ENCODE measurements at regions of chr17 and their contacts with region 1.

Region 1: GRCh38 chr17:49788478-49789242 is at the start of gene KAT7:
- DNase-seq: peak; percentile 94 to 100 (median 98)
- ATAC-seq: peak; percentile 82
- H3K4me3 ChIP-seq: peak within 1 kb of the TSS; percentile 84 to 98
- H3K4me3 Mint-ChIP-seq: peak within 1 kb of the TSS; percentile 99
- H3K27ac ChIP-seq: peak within 1 kb of the TSS; percentile 96 to 99
- H3K27ac Mint-ChIP-seq: peak within 1 kb of the TSS; percentile 100
- H3K4me1 ChIP-seq: peaks cover 45% of the 10 kb centered on the region
- H3K4me1 Mint-ChIP-seq: peaks cover 54% of the 10 kb centered on the region
- H3K27me3 ChIP-seq: no peaks in the 10 kb centered on the region
- H3K27me3 Mint-ChIP-seq: no peaks in the 10 kb centered on the region
- CTCF ChIP-seq: no peak
- total RNA-seq, gene KAT7: 170 to 189 TPM

Region 2: GRCh38 chr17:49567871-49568694 is 220.6 kb before region 1 on chr17:
- CTCF ChIA-PET with region 1: interaction called, 6 read pairs
- POLR2A ChIA-PET with region 1: interaction called, 3 read pairs
- intact Hi-C with region 1: loop called (anchors 1 to 2 kb)
- DNase-seq: peak; percentile 69 to 91 (median 82)
- ATAC-seq: peak; percentile 59
- H3K4me3 ChIP-seq: peak overlapping the region; percentile 6 to 25
- H3K4me3 Mint-ChIP-seq: peak overlapping the region; percentile 62
- H3K27ac ChIP-seq: no peak overlapping the region
- H3K27ac Mint-ChIP-seq: no peak overlapping the region
- H3K4me1 ChIP-seq: peaks cover 12% of the 10 kb centered on the region
- H3K4me1 Mint-ChIP-seq: peaks cover 8% of the 10 kb centered on the region
- H3K27me3 ChIP-seq: no peaks in the 10 kb centered on the region
- H3K27me3 Mint-ChIP-seq: peaks cover 12% of the 10 kb centered on the region
- CTCF ChIP-seq: peak; percentile 96

Region 3: GRCh38 chr17:49715717-49716279 is 72.9 kb before region 1 on chr17:
- CTCF ChIA-PET with region 1: interaction called, 3 read pairs
- POLR2A ChIA-PET with region 1: interaction called, 8 read pairs
- intact Hi-C with region 1: loop called in 1 of 2 experiments (anchors 2 kb)
- DNase-seq: peak in 6 of 9 experiments; percentile 27 to 92 (median 58)
- ATAC-seq: peak; percentile 65
- H3K4me3 ChIP-seq: no peak overlapping the region
- H3K4me3 Mint-ChIP-seq: peak overlapping the region; percentile 20
- H3K27ac ChIP-seq: peak overlapping the region; percentile 67 to 91
- H3K27ac Mint-ChIP-seq: peak overlapping the region; percentile 92
- H3K4me1 ChIP-seq: peaks cover 31% of the 10 kb centered on the region
- H3K4me1 Mint-ChIP-seq: peaks cover 41% of the 10 kb centered on the region
- H3K27me3 ChIP-seq: no peaks in the 10 kb centered on the region
- H3K27me3 Mint-ChIP-seq: no peaks in the 10 kb centered on the region
- CTCF ChIP-seq: no peak

Region 4: DNA sequence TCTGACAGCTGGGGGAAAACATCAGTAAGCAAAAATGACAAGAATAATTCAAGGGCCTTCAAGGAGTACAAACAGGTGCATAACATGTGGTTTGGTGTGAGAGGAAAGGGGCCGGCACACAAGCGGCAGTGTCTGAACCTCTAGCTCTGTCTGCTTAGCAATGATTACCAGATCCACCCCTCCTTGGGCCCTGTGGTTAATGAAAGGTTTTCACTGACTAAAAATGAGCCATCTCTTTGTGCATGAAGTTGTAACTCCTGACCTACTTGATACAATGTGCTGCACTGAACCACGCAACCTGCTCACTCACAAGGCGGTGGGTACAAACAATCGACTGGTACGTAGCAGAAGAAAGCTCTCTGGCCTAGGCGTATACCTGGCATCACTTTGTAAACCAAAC is 39.9 kb before region 1 on chr17:
- CTCF ChIA-PET with region 1: interaction called, 4 read pairs
- POLR2A ChIA-PET with region 1: interaction called, 10 read pairs
- intact Hi-C with region 1: no loop called
- DNase-seq: peak in 8 of 9 experiments; percentile 26 to 85 (median 64)
- ATAC-seq: peak; percentile 82
- H3K4me3 ChIP-seq: peak overlapping the region in 1 of 2 experiments; percentile 10
- H3K4me3 Mint-ChIP-seq: peak overlapping the region; percentile 79
- H3K27ac ChIP-seq: peak overlapping the region; percentile 60 to 88
- H3K27ac Mint-ChIP-seq: peak overlapping the region; percentile 99
- H3K4me1 ChIP-seq: peaks cover 84% of the 10 kb centered on the region
- H3K4me1 Mint-ChIP-seq: peaks cover 84% of the 10 kb centered on the region
- H3K27me3 ChIP-seq: no peaks in the 10 kb centered on the region
- H3K27me3 Mint-ChIP-seq: no peaks in the 10 kb centered on the region
- CTCF ChIP-seq: no peak

Region 5: GRCh38 chr17:49815761-49816281 is 27.2 kb after region 1 on chr17:
- CTCF ChIA-PET with region 1: interaction called, 3 read pairs
- POLR2A ChIA-PET with region 1: interaction called, 5 read pairs
- intact Hi-C with region 1: loop called in 1 of 2 experiments (anchors 2 kb)
- DNase-seq: no peak
- ATAC-seq: no peak
- H3K4me3 ChIP-seq: no peak overlapping the region
- H3K4me3 Mint-ChIP-seq: no peak overlapping the region
- H3K27ac ChIP-seq: peak overlapping the region in 1 of 2 experiments; percentile 6
- H3K27ac Mint-ChIP-seq: peak overlapping the region; percentile 32
- H3K4me1 ChIP-seq: peaks cover 66% of the 10 kb centered on the region
- H3K4me1 Mint-ChIP-seq: peaks cover 70% of the 10 kb centered on the region
- H3K27me3 ChIP-seq: no peaks in the 10 kb centered on the region
- H3K27me3 Mint-ChIP-seq: no peaks in the 10 kb centered on the region
- CTCF ChIP-seq: no peak

Region 6: DNA sequence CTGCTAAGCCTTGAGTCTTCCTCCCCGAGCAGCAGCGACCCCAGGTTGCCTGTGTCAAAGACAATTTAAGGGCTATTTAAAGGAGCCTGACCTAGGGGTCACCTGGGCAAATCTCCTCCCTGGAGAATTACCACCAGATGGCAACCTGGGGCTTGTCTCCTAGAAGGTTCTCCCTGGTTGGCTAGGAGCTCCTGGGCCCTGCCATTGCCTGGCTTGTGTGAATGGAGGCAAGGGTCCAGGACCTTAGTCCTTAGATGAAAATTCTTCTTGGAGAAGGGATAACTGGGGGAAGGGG is 110.5 kb after region 1 on chr17:
- CTCF ChIA-PET with region 1: no interaction called
- POLR2A ChIA-PET with region 1: no interaction called
- intact Hi-C with region 1: no loop called
- DNase-seq: no peak
- ATAC-seq: no peak
- H3K4me3 ChIP-seq: no peak overlapping the region
- H3K4me3 Mint-ChIP-seq: no peak overlapping the region
- H3K27ac ChIP-seq: no peak overlapping the region
- H3K27ac Mint-ChIP-seq: no peak overlapping the region
- H3K4me1 ChIP-seq: peaks cover 3% of the 10 kb centered on the region
- H3K4me1 Mint-ChIP-seq: peaks cover 2% of the 10 kb centered on the region
- H3K27me3 ChIP-seq: peaks cover 9 to 15% of the 10 kb centered on the region in 2 experiments
- H3K27me3 Mint-ChIP-seq: peaks cover 58% of the 10 kb centered on the region
- CTCF ChIP-seq: no peak

Measured in CD8-positive, alpha-beta T cell (primary cell).